Heart right ventricle (tissue), 16 donors: ENCODE measurements at regions of chr3 and their contacts with region 1.

Region 1: GRCh38 chr3:57007513-57008460 is 52.7 kb upstream of the SPATA12 start:
- DNase-seq: peak; percentile 43 to 51
- ATAC-seq: peak; percentile 65 to 92 (median 86)
- H3K4me3 ChIP-seq: peak overlapping the region in 1 of 10 donors; percentile 14
- H3K27ac ChIP-seq: peak overlapping the region in 8 of 10 donors; percentile 35 to 82 (median 68)
- H3K4me1 ChIP-seq: peaks cover 4 to 31% (median 25%) of the 10 kb centered on the region in 9 donors
- H3K27me3 ChIP-seq: no peaks in the 10 kb centered on the region
- CTCF ChIP-seq: no peak

Region 2: DNA sequence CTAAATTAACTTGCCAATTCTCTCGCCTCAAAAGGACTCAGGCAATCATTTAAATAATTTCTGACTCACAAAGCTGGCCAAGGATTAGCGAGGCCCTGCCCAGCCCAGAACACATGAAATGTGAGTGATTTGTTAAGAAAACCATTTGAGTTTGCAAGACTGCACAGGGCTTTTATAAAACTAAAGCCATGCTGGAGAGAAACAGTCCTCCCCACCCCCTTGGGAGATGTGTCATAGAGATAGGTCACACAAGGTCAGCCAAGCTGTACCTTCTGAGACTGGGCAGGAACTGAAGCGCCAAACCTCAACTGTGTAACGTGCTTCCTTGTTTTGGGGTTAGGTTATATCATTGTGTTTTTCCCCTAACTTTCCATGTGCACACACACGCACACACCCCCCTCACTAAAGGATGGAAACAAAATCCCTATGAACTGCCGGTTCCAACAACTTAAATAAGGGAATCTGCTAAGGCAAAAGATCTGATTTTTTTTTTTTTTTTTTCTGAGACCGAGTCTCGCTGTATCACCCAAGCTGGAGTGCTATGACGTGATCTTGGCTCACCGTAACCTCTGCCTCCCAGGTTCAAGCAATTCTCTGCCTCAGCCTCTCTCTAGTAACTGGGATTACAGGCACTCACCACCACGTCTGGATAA is 60.8 kb after region 1 on chr3:
- intact Hi-C with region 1: loop called in 1 of 10 experiments (anchors 5 kb)
- DNase-seq: peak in 1 of 2 donors; percentile 53
- ATAC-seq: peak; percentile 80 to 94 (median 86)
- H3K4me3 ChIP-seq: no peak overlapping the region
- H3K27ac ChIP-seq: peak overlapping the region in 8 of 10 donors; percentile 15 to 65 (median 56)
- H3K4me1 ChIP-seq: peaks cover 0 to 33% (median 9%) of the 10 kb centered on the region in 9 donors
- H3K27me3 ChIP-seq: no peaks in the 10 kb centered on the region
- CTCF ChIP-seq: no peak

Region 3: DNA sequence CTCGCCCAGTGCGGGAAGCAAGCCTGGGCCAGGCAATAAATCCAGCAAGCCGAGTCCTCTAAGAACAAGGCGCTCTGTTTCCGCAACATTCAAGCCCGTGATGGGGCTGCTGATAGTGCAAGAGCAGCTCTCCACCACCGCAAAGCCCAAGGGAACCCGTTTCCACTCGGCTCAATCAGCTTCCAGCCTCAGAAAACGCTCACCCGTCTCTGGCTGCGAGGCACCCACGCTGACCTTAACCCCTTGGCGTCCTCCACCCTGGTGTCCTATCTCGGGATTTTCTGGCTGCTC is 70.5 kb after region 1 on chr3:
- intact Hi-C with region 1: loop called in 2 of 10 experiments (anchors 5 kb)
- DNase-seq: peak; percentile 36 to 48
- ATAC-seq: peak in 7 of 8 donors; percentile 36 to 76 (median 44)
- H3K4me3 ChIP-seq: peak overlapping the region; percentile 52 to 85 (median 76)
- H3K27ac ChIP-seq: peak overlapping the region in 6 of 10 donors; percentile 16 to 58 (median 43)
- H3K4me1 ChIP-seq: peaks cover 0 to 15% (median 12%) of the 10 kb centered on the region in 9 donors
- H3K27me3 ChIP-seq: peaks cover 0 to 48% (median 0%) of the 10 kb centered on the region in 7 donors
- CTCF ChIP-seq: no peak